B cell (primary cell): ENCODE measurements at regions of chr6 and their contacts with region 1.

Region 1: DNA sequence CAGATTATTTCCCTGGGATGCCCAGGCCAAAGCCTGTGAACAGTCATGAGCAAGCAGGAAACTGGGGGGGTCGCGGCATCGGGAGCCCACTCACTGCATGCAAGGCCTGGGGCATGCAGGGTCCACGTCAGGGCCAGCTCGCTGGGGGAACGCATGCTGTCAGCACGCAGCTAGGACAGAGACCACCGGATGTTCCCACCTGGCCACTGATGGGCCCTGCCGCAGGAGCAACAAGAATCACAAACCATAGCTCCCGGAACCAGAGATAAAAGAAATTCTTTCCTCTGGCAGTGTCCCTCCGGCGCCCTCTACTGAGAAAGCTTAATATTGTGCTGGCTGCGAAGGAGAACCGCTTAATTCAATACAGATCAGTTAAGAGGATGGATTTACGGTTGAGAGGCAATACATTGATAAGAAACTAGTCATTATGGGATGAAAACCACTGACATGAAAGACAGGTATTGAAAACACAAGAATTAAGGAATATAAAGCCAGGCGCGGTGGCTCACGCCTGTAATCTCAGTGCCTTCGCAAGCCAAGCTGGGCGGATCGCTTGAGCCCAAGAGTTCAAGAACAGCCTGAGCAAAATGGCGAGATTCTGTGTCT is 32.6 kb downstream of the C6orf15 start:
- DNase-seq: peak; percentile 77
- ATAC-seq: peak; percentile 82
- H3K4me3 ChIP-seq: peak overlapping the region in 3 of 5 experiments; percentile 23 to 43 (median 34)
- H3K4me3 Mint-ChIP-seq: peak overlapping the region; percentile 73
- H3K27ac ChIP-seq: no peak overlapping the region
- H3K27ac Mint-ChIP-seq: no peak overlapping the region
- H3K4me1 ChIP-seq: peaks cover 4 to 5% of the 10 kb centered on the region in 2 donors
- H3K4me1 Mint-ChIP-seq: peaks cover 4% of the 10 kb centered on the region
- H3K27me3 ChIP-seq: no peaks in the 10 kb centered on the region
- H3K27me3 Mint-ChIP-seq: peaks cover 9% of the 10 kb centered on the region
- CTCF ChIP-seq: peak; percentile 94

Region 2: DNA sequence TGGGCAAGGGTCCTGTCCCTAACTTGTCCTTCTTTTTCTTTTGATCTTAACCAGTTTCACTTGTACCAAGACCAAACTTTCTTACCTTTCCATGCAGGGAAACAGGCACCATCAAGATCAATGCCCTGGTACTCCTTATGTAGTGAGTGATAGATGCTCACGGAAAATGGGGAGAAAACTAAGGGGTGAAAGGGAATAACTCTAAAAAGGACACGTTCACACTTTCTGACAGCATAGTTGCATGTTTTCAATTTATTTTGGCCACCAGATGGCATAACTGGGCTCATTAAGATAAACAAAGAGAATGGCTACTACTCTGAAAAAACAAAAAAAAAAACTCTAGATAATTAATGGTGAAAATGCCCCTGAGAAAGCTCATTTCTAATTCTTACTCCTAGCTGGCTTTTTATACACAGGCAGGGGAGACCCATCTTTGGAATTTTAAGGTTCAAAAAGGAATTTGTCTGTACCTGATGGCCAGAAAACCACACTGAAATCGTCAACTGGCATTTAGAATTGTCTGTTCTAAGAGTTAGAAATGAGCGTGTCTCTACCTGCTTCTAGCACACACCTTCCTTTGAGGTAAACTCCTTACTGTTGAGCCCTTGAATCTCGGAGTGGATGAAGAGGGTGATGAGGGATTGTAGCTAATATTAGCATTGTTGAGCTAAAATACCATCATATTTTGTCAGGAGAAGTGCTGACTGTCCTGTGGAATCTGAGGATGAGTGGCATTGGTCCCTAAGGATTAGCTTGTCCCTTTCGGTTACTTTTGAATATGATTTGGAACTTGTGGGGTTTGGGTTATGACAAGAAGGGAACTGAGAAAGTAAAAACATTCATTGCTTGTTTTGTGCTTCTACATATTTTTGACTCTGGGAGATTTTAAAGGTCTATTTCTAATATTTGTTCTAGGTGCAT is 257.6 kb before region 1 on chr6:
- CTCF ChIA-PET with region 1: interaction called, 107 read pairs
- POLR2A ChIA-PET with region 1: no interaction called
- intact Hi-C with region 1: no loop called
- DNase-seq: peak; percentile 57
- ATAC-seq: no peak
- H3K4me3 ChIP-seq: no peak overlapping the region
- H3K4me3 Mint-ChIP-seq: no peak overlapping the region
- H3K27ac ChIP-seq: no peak overlapping the region
- H3K27ac Mint-ChIP-seq: no peak overlapping the region
- H3K4me1 ChIP-seq: no peaks in the 10 kb centered on the region
- H3K4me1 Mint-ChIP-seq: peaks cover 11% of the 10 kb centered on the region
- H3K27me3 ChIP-seq: no peaks in the 10 kb centered on the region
- H3K27me3 Mint-ChIP-seq: peaks cover 2% of the 10 kb centered on the region
- CTCF ChIP-seq: peak; percentile 74

Region 3: GRCh38 chr6:30837870-30838269 is 241.9 kb before region 1 on chr6:
- CTCF ChIA-PET with region 1: interaction called, 17 read pairs
- POLR2A ChIA-PET with region 1: no interaction called
- intact Hi-C with region 1: no loop called
- DNase-seq: no peak
- ATAC-seq: no peak
- H3K4me3 ChIP-seq: no peak overlapping the region
- H3K4me3 Mint-ChIP-seq: no peak overlapping the region
- H3K27ac ChIP-seq: no peak overlapping the region
- H3K27ac Mint-ChIP-seq: no peak overlapping the region
- H3K4me1 ChIP-seq: peaks cover 8 to 17% of the 10 kb centered on the region in 2 donors
- H3K4me1 Mint-ChIP-seq: peaks cover 12% of the 10 kb centered on the region
- H3K27me3 ChIP-seq: peaks cover 0 to 4% (median 0%) of the 10 kb centered on the region in 4 experiments
- H3K27me3 Mint-ChIP-seq: peaks cover 14% of the 10 kb centered on the region
- CTCF ChIP-seq: no peak

Region 4: DNA sequence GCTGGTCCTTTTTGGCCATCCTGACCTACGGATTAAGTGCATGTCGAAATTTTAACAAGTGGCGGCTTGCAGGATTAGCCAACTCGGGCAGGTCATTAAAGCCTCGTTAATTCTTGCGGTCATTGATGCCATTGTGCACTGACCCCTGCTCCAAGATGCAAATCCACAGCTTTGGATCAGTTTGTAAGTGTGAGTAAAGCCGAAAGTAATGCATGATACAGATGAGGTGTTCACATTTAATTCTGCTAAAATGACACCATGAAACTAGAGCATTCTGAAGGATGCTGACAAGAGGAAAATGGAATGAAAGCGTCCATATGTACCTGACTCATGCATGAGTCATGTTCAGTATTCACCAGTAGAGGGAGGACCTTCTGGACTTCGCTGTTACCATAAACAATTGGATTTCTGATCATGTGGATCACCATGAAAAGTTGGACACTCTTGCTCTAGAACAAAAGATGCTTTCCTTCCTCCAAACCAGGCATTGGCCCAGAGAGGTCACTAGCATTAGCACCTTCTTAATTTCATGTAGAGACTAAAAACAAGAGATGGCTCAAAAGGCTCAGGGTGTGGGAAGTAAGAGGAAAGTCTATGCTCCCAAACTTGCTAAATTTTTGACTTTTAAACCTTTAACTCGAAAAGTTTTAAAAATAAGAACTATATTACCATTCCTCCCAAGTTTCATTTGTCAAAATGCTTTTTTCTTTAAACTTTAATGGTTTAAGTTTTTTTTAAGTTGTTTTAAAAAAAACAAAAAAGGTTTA is 21.4 kb before region 1 on chr6:
- CTCF ChIA-PET with region 1: interaction called, 16 read pairs
- POLR2A ChIA-PET with region 1: no interaction called
- intact Hi-C with region 1: no loop called
- DNase-seq: no peak
- ATAC-seq: no peak
- H3K4me3 ChIP-seq: no peak overlapping the region
- H3K4me3 Mint-ChIP-seq: no peak overlapping the region
- H3K27ac ChIP-seq: no peak overlapping the region
- H3K27ac Mint-ChIP-seq: no peak overlapping the region
- H3K4me1 ChIP-seq: no peaks in the 10 kb centered on the region
- H3K4me1 Mint-ChIP-seq: peaks cover 12% of the 10 kb centered on the region
- H3K27me3 ChIP-seq: peaks cover 0 to 4% (median 0%) of the 10 kb centered on the region in 4 experiments
- H3K27me3 Mint-ChIP-seq: no peaks in the 10 kb centered on the region
- CTCF ChIP-seq: no peak

Region 5: GRCh38 chr6:31068669-31069340 is 11.0 kb before region 1 on chr6:
- CTCF ChIA-PET with region 1: interaction called, 34 read pairs
- POLR2A ChIA-PET with region 1: no interaction called
- intact Hi-C with region 1: no loop called
- DNase-seq: peak; percentile 82
- ATAC-seq: peak; percentile 98
- H3K4me3 ChIP-seq: no peak overlapping the region
- H3K4me3 Mint-ChIP-seq: no peak overlapping the region
- H3K27ac ChIP-seq: no peak overlapping the region
- H3K27ac Mint-ChIP-seq: no peak overlapping the region
- H3K4me1 ChIP-seq: no peaks in the 10 kb centered on the region
- H3K4me1 Mint-ChIP-seq: peaks cover 2% of the 10 kb centered on the region
- H3K27me3 ChIP-seq: peaks cover 0 to 2% (median 0%) of the 10 kb centered on the region in 4 experiments
- H3K27me3 Mint-ChIP-seq: no peaks in the 10 kb centered on the region
- CTCF ChIP-seq: peak; percentile 92

Region 6: GRCh38 chr6:31094389-31094881 is 14.7 kb after region 1 on chr6:
- CTCF ChIA-PET with region 1: interaction called, 19 read pairs
- POLR2A ChIA-PET with region 1: no interaction called
- intact Hi-C with region 1: no loop called
- DNase-seq: peak; percentile 41
- ATAC-seq: peak; percentile 61
- H3K4me3 ChIP-seq: peak overlapping the region in 1 of 5 experiments; percentile 22
- H3K4me3 Mint-ChIP-seq: peak overlapping the region; percentile 67
- H3K27ac ChIP-seq: peak overlapping the region in 1 of 2 donors; percentile 59
- H3K27ac Mint-ChIP-seq: peak overlapping the region; percentile 85
- H3K4me1 ChIP-seq: peaks cover 13 to 16% of the 10 kb centered on the region in 2 donors
- H3K4me1 Mint-ChIP-seq: peaks cover 16% of the 10 kb centered on the region
- H3K27me3 ChIP-seq: no peaks in the 10 kb centered on the region
- H3K27me3 Mint-ChIP-seq: no peaks in the 10 kb centered on the region
- CTCF ChIP-seq: no peak

Region 7: GRCh38 chr6:31216208-31216898 is 136.6 kb after region 1 on chr6:
- CTCF ChIA-PET with region 1: no interaction called
- POLR2A ChIA-PET with region 1: no interaction called
- intact Hi-C with region 1: no loop called
- DNase-seq: peak; percentile 25
- ATAC-seq: peak; percentile 41
- H3K4me3 ChIP-seq: peak overlapping the region in 1 of 5 experiments; percentile 20
- H3K4me3 Mint-ChIP-seq: peak overlapping the region; percentile 8
- H3K27ac ChIP-seq: peak overlapping the region; percentile 64 to 66
- H3K27ac Mint-ChIP-seq: peak overlapping the region; percentile 70
- H3K4me1 ChIP-seq: peaks cover 9 to 13% of the 10 kb centered on the region in 2 donors
- H3K4me1 Mint-ChIP-seq: peaks cover 7% of the 10 kb centered on the region
- H3K27me3 ChIP-seq: no peaks in the 10 kb centered on the region
- H3K27me3 Mint-ChIP-seq: no peaks in the 10 kb centered on the region
- CTCF ChIP-seq: no peak